ENCODE measurements at regions of chr9 and their contacts with region 1.

Region 1: GRCh38 chr9:128438343-128439109 is 17.3 kb upstream of the ODF2 start:
- DNase-seq: peak; percentile 84
- H3K4me3 Mint-ChIP-seq: no peak overlapping the region
- H3K27ac Mint-ChIP-seq: no peak overlapping the region
- H3K4me1 Mint-ChIP-seq: no peaks in the 10 kb centered on the region
- H3K27me3 Mint-ChIP-seq: no peaks in the 10 kb centered on the region
- CTCF ChIP-seq: peak; percentile 73

Region 2: DNA sequence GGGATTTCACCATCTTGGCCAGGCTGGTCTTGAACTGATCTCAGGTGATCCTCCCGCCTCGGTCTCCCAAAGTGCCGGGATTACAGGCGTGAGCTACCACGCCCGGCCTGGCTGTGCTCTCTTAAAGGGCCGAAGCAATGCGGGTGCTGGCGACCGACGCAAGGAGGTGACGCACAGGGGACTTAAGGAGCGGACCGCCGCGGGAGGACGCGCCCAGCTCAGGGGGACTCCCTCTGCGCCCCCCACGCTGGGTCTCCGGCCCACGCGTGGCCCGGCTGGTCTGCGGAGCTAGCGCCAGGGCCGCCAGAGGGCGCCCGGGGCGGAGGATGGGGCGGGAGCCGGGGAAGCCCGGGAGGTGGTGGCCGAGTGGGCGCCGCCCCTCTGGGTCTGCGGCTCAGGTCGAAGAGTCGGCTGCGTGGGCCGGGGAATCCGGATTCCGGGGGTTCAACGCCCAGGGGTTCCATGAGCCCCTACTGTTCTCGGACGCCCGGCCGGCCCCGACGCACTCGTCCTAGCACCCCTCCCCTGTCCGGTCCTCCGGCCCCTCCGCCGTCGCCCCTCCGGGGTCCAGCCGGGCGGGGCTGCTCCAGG is 18.4 kb before region 1 on chr9:
- CTCF ChIA-PET with region 1: interaction called, 14 read pairs
- intact Hi-C with region 1: no loop called
- DNase-seq: peak; percentile 73
- H3K4me3 Mint-ChIP-seq: peak overlapping the region; percentile 71
- H3K27ac Mint-ChIP-seq: no peak overlapping the region
- H3K4me1 Mint-ChIP-seq: peaks cover 16% of the 10 kb centered on the region
- H3K27me3 Mint-ChIP-seq: peaks cover under 1% of the 10 kb centered on the region
- CTCF ChIP-seq: peak; percentile 71

Region 3: GRCh38 chr9:128494108-128494745 is 55.7 kb after region 1 on chr9:
- CTCF ChIA-PET with region 1: no interaction called
- intact Hi-C with region 1: no loop called
- DNase-seq: no peak
- H3K4me3 Mint-ChIP-seq: no peak overlapping the region
- H3K27ac Mint-ChIP-seq: no peak overlapping the region
- H3K4me1 Mint-ChIP-seq: no peaks in the 10 kb centered on the region
- H3K27me3 Mint-ChIP-seq: no peaks in the 10 kb centered on the region
- CTCF ChIP-seq: no peak

Measured in Calu3 (cell line).